ENCODE measurements at regions of chr7 and their contacts with region 1.

Region 1: GRCh38 chr7:129163875-129164544 is 19.5 kb downstream of the TSPAN33 start:
- DNase-seq: no peak
- ATAC-seq: peak; percentile 40
- H3K4me3 ChIP-seq: no peak overlapping the region
- H3K27ac ChIP-seq: no peak overlapping the region
- H3K4me1 ChIP-seq: peaks cover 57% of the 10 kb centered on the region
- H3K27me3 ChIP-seq: no peaks in the 10 kb centered on the region
- CTCF ChIP-seq: peak; percentile 61 to 78 (median 64)
- EP300 ChIP-seq: no peak
- POLR2A ChIP-seq: no peak
- RAD21 ChIP-seq: peak; percentile 60; the same call in 1 of the 2 replicates

Region 2: GRCh38 chr7:129066290-129067131 is 97.5 kb before region 1 on chr7:
- CTCF ChIA-PET with region 1: interaction called, 16 read pairs
- POLR2A ChIA-PET with region 1: no interaction called
- RAD21 ChIA-PET with region 1: interaction called, 4 read pairs
- SMC1A ChIA-PET with region 1: interaction called, 3 read pairs
- in situ Hi-C with region 1: no loop called
- intact Hi-C with region 1: no loop called
- DNase-seq: no peak
- ATAC-seq: peak; percentile 35
- H3K4me3 ChIP-seq: no peak overlapping the region
- H3K27ac ChIP-seq: no peak overlapping the region
- H3K4me1 ChIP-seq: no peaks in the 10 kb centered on the region
- H3K27me3 ChIP-seq: no peaks in the 10 kb centered on the region
- CTCF ChIP-seq: no peak
- EP300 ChIP-seq: no peak
- POLR2A ChIP-seq: no peak
- RAD21 ChIP-seq: no peak

Region 3: DNA sequence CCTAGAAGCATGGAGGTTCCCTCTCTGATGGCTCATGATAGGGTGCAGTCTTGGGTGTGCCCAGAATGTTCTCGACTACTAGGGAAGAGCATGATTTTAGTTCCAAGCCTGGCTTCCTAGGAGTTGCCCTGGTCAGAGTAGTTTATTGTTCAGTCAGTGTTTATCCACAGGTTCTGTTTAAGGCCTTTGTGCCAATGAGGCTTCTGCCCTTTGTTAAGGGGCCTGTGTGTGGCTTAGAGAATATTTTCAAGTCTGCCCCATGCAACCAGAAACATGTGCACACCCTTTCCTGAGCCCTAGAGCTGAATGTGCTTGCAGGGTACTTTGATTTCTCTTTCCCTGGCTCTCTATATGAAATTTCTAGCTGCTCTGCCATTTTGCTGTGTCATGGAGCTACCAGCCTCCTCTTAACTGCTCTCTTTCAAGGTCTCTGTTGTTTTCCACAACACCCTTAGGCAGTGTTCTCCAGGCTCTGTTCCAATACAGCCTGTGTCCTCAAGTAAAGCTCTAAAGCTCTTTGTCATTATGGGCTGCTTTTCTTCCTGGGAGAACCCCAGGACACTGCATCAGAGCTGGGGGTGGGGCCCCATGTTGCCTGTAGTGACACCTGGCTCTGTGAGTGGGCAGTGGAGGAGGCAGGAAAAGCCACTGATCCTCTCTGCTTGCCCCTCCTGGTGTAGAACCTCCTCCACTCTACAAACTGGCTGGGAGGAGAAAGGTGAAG is 53.6 kb before region 1 on chr7:
- CTCF ChIA-PET with region 1: interaction called, 10 read pairs
- POLR2A ChIA-PET with region 1: no interaction called
- RAD21 ChIA-PET with region 1: interaction called, 8 read pairs
- SMC1A ChIA-PET with region 1: interaction called, 4 read pairs
- in situ Hi-C with region 1: no loop called
- intact Hi-C with region 1: no loop called
- DNase-seq: no peak
- ATAC-seq: peak; percentile 51; the same call in 2 of the 3 replicates
- H3K4me3 ChIP-seq: no peak overlapping the region
- H3K27ac ChIP-seq: peak overlapping the region; percentile 30; the same call in 1 of the 2 replicates
- H3K4me1 ChIP-seq: peaks cover 9% of the 10 kb centered on the region
- H3K27me3 ChIP-seq: no peaks in the 10 kb centered on the region
- CTCF ChIP-seq: no peak
- EP300 ChIP-seq: no peak
- POLR2A ChIP-seq: no peak
- RAD21 ChIP-seq: no peak

Region 4: GRCh38 chr7:129136887-129137642 is 26.9 kb before region 1 on chr7:
- CTCF ChIA-PET with region 1: interaction called, 12 read pairs
- POLR2A ChIA-PET with region 1: interaction called, 3 read pairs
- RAD21 ChIA-PET with region 1: interaction called, 7 read pairs
- SMC1A ChIA-PET with region 1: interaction called, 7 read pairs
- in situ Hi-C with region 1: no loop called
- intact Hi-C with region 1: no loop called
- DNase-seq: no peak
- ATAC-seq: peak; percentile 83
- H3K4me3 ChIP-seq: no peak overlapping the region
- H3K27ac ChIP-seq: peak overlapping the region; percentile 47
- H3K4me1 ChIP-seq: peaks cover 19% of the 10 kb centered on the region
- H3K27me3 ChIP-seq: no peaks in the 10 kb centered on the region
- CTCF ChIP-seq: no peak
- EP300 ChIP-seq: 0 out of 4 replicates have a peak, but pooled peaks of 1 of the 2 experiments have one; percentile 12
- POLR2A ChIP-seq: no peak
- RAD21 ChIP-seq: no peak

Region 5: DNA sequence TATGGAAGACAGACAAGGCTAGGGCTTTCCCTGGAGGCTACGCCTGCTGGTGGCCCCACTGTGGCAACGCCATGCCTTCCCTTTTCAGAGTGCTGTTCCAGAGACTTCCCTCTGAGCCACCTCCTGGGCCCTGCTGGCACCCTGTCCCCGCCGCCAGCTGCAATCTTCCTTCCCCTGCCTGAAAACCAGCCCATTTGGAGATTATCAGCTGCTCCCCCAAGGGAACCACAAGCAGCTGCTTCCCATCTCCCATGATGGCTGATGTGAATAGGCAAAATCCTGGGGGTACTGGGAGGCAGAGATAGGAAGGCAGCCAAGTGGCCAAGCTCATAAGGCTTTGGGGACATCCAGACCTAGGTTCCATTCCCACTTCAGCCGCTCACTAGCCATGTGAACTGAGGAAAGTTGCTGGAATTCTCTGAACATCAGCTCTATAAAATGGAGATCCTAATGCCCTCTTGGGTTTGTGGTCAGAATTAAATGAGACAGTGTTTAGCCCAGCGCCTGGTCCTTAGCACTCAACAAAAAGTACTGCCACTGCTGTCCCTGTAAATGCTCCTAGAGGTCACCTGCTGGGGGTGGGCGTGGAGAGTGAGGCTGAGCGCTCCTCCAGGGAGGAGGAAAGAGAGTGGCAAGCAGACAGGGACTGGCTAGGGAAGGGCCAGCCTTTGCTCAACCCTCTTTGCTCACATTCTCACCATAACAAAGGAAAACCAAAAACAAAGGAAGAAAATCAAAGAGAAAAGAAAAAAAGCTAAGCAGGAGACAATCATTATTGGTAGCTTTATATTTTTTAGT is 13.6 kb before region 1 on chr7:
- CTCF ChIA-PET with region 1: interaction called, 168 read pairs
- POLR2A ChIA-PET with region 1: interaction called, 32 read pairs
- RAD21 ChIA-PET with region 1: interaction called, 71 read pairs
- SMC1A ChIA-PET with region 1: interaction called, 83 read pairs
- in situ Hi-C with region 1: no loop called
- intact Hi-C with region 1: loop called (anchors 1 kb)
- DNase-seq: no peak
- ATAC-seq: no peak
- H3K4me3 ChIP-seq: no peak overlapping the region
- H3K27ac ChIP-seq: peak overlapping the region; percentile 21
- H3K4me1 ChIP-seq: peaks cover 33% of the 10 kb centered on the region
- H3K27me3 ChIP-seq: no peaks in the 10 kb centered on the region
- CTCF ChIP-seq: no peak
- EP300 ChIP-seq: no peak
- POLR2A ChIP-seq: peak; percentile 26; the same call in 1 of the 2 replicates
- RAD21 ChIP-seq: no peak

Region 6: DNA sequence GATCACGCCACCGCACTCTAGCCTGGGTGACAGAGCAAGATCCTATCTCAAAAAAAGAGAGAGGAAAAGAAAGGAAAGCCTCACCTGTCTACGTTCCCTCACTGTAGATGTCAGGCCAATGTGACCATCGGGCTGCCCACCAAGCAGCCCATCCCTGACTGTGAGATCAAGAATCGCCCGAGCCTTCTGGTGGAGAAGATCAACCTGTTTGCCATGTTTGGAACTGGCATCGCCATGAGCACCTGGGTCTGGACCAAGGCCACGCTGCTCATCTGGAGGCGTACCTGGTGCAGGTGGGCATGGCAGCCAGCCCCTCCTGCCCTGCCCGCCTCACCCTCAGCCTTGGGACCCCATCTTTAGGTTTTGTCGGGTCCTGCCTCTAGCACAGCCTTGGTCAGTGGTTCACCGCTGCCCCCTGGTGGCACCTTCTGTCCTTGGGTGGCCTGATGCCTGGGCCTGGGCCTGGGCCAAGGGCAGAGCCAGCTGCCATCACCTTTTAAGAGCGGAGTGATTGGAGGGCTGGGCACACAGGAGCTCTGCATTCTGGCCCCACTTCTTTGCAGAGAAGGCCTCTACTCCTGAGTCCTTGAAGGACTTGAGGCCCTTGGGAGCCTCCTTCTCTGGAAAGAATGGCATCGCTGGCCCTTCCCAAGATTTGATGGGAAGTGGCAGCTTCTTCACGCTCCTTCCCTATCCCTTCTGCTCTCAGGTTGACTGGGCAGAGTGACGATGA is 46.4 kb after region 1 on chr7:
- CTCF ChIA-PET with region 1: interaction called, 109 read pairs
- POLR2A ChIA-PET with region 1: interaction called, 3 read pairs
- RAD21 ChIA-PET with region 1: interaction called, 67 read pairs
- SMC1A ChIA-PET with region 1: interaction called, 70 read pairs
- in situ Hi-C with region 1: no loop called
- intact Hi-C with region 1: loop called (anchors 2 kb)
- DNase-seq: no peak
- ATAC-seq: peak; percentile 97
- H3K4me3 ChIP-seq: no peak overlapping the region
- H3K27ac ChIP-seq: no peak overlapping the region
- H3K4me1 ChIP-seq: no peaks in the 10 kb centered on the region
- H3K27me3 ChIP-seq: no peaks in the 10 kb centered on the region
- CTCF ChIP-seq: peak; percentile 86 to 94 (median 91)
- EP300 ChIP-seq: no peak
- POLR2A ChIP-seq: no peak
- RAD21 ChIP-seq: peak; percentile 97

Region 7: DNA sequence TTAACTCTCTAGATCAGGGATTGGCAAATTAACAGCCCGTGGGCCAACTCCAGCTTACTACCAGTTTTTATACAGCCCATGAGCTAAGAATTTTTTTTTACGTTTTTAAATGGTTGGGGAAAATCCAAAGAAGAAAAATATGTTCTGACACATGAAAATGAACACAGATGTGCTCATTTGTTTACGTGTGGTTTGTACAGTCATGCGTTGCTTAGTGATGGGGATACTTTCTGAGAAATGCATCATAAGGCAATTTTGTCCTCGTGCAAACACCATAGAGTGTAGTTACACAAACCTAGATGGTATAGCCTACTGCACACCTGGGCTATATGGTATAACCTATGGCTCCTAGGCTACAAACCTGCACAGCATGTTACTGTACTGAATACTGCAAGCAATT is 330.0 kb after region 1 on chr7:
- CTCF ChIA-PET with region 1: no interaction called
- POLR2A ChIA-PET with region 1: no interaction called
- RAD21 ChIA-PET with region 1: no interaction called
- SMC1A ChIA-PET with region 1: no interaction called
- in situ Hi-C with region 1: no loop called
- intact Hi-C with region 1: no loop called
- DNase-seq: peak; percentile 31
- ATAC-seq: peak; percentile 88
- H3K4me3 ChIP-seq: no peak overlapping the region
- H3K27ac ChIP-seq: no peak overlapping the region
- H3K4me1 ChIP-seq: peaks cover 4% of the 10 kb centered on the region; the same call in 1 of the 2 replicates
- H3K27me3 ChIP-seq: no peaks in the 10 kb centered on the region
- CTCF ChIP-seq: no peak
- EP300 ChIP-seq: no peak
- POLR2A ChIP-seq: no peak
- RAD21 ChIP-seq: no peak